Cardiac septum (tissue), 1 donor: ENCODE measurements at regions of chr9 and their contacts with region 1.

Region 1: GRCh38 chr9:90102292-90102901 is 497.6 kb downstream of the GADD45G start:
- DNase-seq: peak; percentile 88

Region 2: GRCh38 chr9:89597711-89598625 is 504.4 kb before region 1 on chr9:
- intact Hi-C with region 1: loop called (anchors 1 kb)
- DNase-seq: peak; percentile 58

Region 3: GRCh38 chr9:89750147-89750861 is 352.1 kb before region 1 on chr9:
- intact Hi-C with region 1: loop called (anchors 10 kb)
- DNase-seq: no peak

Region 4: GRCh38 chr9:89919169-89919681 is 183.2 kb before region 1 on chr9:
- intact Hi-C with region 1: loop called (anchors 5 kb)
- DNase-seq: no peak

Region 5: GRCh38 chr9:89999534-90000370 is 102.6 kb before region 1 on chr9:
- intact Hi-C with region 1: loop called (anchors 5 kb)
- DNase-seq: peak; percentile 89